Activated naive CD4-positive, alpha-beta T cell treated with anti-CD3 and anti-CD28 coated beads for 36 hours (primary cell): ENCODE measurements at regions of chr11 and their contacts with region 1.

Region 1: GRCh38 chr11:13183094-13183825 is 94.3 kb upstream of the BMAL1 start:
- DNase-seq: peak; percentile 13
- H3K4me3 Mint-ChIP-seq: no peak overlapping the region
- H3K27ac Mint-ChIP-seq: no peak overlapping the region
- H3K4me1 Mint-ChIP-seq: peaks cover 6% of the 10 kb centered on the region
- H3K27me3 Mint-ChIP-seq: peaks cover 9% of the 10 kb centered on the region

Region 2: GRCh38 chr11:11291041-11292015 is 1891.9 kb before region 1 on chr11:
- CTCF ChIA-PET with region 1: no interaction called
- intact Hi-C with region 1: no loop called
- DNase-seq: no peak
- H3K4me3 Mint-ChIP-seq: no peak overlapping the region
- H3K27ac Mint-ChIP-seq: no peak overlapping the region
- H3K4me1 Mint-ChIP-seq: no peaks in the 10 kb centered on the region
- H3K27me3 Mint-ChIP-seq: peaks cover 6% of the 10 kb centered on the region

Region 3: GRCh38 chr11:12331239-12331874 is 851.9 kb before region 1 on chr11:
- CTCF ChIA-PET with region 1: interaction called, 3 read pairs
- intact Hi-C with region 1: loop called (anchors 10 kb)
- DNase-seq: peak; percentile 89
- H3K4me3 Mint-ChIP-seq: no peak overlapping the region
- H3K27ac Mint-ChIP-seq: no peak overlapping the region
- H3K4me1 Mint-ChIP-seq: peaks cover 3% of the 10 kb centered on the region
- H3K27me3 Mint-ChIP-seq: no peaks in the 10 kb centered on the region

Region 4: DNA sequence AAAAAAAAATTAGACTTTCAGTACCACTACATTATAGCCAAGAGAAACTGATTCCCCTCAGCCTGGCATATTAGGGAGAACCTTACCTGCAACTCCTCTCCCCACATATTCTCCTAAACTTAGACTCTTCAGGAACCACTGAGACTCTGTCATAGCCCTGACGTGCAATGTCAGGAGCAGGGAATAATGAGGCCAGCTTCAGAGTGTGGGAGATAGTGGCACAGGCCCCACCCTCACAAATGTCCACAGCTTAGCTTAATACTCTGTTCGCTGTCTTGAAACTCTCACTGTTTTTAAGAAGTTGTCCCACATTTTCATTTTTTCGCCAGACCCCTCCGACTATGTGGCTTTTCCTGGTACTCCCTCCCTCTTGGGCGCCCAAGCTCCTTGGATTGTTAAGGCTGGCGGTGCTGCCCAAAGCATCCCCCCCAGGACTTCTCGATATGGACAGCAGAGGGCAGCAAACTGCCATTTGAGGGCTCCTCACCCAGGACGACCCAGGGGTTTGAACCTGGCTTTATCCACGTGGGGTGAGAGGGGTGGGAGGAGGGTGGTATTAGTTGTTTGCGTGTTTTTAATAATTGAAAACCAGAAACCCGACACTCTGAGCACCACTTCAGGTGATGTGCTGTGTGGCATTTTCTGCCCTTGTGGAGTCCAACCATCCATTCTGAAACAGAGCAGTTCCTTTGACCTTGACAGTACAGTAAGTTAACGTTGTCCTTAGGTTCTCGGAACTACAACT is 219.3 kb before region 1 on chr11:
- CTCF ChIA-PET with region 1: interaction called, 21 read pairs
- intact Hi-C with region 1: loop called (anchors 1 kb)
- DNase-seq: peak; percentile 75
- H3K4me3 Mint-ChIP-seq: no peak overlapping the region
- H3K27ac Mint-ChIP-seq: no peak overlapping the region
- H3K4me1 Mint-ChIP-seq: no peaks in the 10 kb centered on the region
- H3K27me3 Mint-ChIP-seq: peaks cover 13% of the 10 kb centered on the region

Region 5: GRCh38 chr11:12989428-12990161 is 193.7 kb before region 1 on chr11:
- CTCF ChIA-PET with region 1: no interaction called
- intact Hi-C with region 1: no loop called
- DNase-seq: no peak
- H3K4me3 Mint-ChIP-seq: no peak overlapping the region
- H3K27ac Mint-ChIP-seq: no peak overlapping the region
- H3K4me1 Mint-ChIP-seq: no peaks in the 10 kb centered on the region
- H3K27me3 Mint-ChIP-seq: peaks cover 9% of the 10 kb centered on the region

Region 6: DNA sequence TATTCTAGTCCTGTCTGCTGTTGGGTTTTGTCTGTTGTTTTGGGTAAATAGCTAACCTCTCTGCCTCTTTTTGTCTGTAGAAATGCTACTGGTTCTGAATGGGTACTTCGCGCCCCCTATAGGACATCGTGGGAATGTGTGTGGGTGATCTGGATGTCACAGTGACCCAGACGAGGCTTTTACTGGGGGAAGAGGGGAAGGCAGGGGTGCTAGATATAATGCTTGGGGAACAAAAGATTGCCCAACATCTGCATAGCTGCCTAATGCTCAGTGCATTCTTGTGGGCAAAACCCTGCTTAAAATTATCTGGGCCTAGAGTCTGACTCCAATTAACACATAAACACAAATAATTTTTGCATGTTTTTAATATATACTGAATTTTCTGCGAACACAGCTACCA is 152.1 kb after region 1 on chr11:
- CTCF ChIA-PET with region 1: interaction called, 8 read pairs
- intact Hi-C with region 1: loop called (anchors 2 kb)
- DNase-seq: peak; percentile 86
- H3K4me3 Mint-ChIP-seq: no peak overlapping the region
- H3K27ac Mint-ChIP-seq: no peak overlapping the region
- H3K4me1 Mint-ChIP-seq: peaks cover 76% of the 10 kb centered on the region
- H3K27me3 Mint-ChIP-seq: no peaks in the 10 kb centered on the region

Region 7: GRCh38 chr11:13358596-13359270 is 175.5 kb after region 1 on chr11:
- CTCF ChIA-PET with region 1: no interaction called
- intact Hi-C with region 1: no loop called
- DNase-seq: no peak
- H3K4me3 Mint-ChIP-seq: no peak overlapping the region
- H3K27ac Mint-ChIP-seq: no peak overlapping the region
- H3K4me1 Mint-ChIP-seq: no peaks in the 10 kb centered on the region
- H3K27me3 Mint-ChIP-seq: no peaks in the 10 kb centered on the region

Region 8: DNA sequence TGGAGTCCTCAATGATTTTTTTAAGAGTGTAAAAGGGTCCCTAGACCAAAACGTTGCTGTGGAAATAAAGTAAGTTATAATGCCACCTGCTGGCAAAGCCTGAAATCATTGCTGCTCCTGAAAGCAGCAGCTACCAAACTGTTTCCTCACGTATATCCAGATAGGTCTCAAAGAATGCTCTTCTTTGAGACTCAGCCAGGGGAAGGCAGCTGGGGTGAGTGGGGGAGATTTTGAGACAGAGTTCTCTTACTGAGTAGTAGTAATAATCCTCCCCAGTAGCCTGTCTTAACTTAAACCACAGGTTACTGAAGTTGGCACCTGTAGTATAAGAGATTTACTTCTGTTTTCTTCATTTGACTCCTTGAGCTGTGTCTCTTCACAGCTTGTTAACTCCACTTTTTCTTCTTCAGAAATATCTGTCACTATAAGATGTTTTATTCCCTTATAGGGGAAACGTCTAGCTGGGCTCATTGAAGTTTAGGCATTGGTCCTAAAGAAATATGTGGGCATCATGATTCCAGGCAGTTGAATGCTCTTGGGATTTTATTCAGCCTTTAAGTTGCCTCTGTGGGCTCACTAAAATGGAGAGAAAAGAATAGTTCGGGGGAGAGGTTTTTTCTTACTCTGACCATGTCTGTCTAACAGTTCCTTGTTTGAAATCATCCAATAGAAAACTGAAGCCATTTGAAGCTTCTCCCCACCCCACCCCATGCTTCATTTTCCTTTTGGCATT is 201.8 kb after region 1 on chr11:
- CTCF ChIA-PET with region 1: interaction called, 3 read pairs
- intact Hi-C with region 1: loop called (anchors 1 kb)
- DNase-seq: peak; percentile 46
- H3K4me3 Mint-ChIP-seq: no peak overlapping the region
- H3K27ac Mint-ChIP-seq: no peak overlapping the region
- H3K4me1 Mint-ChIP-seq: peaks cover 2% of the 10 kb centered on the region
- H3K27me3 Mint-ChIP-seq: no peaks in the 10 kb centered on the region

Region 9: GRCh38 chr11:14454861-14455632 is 1271.8 kb after region 1 on chr11:
- CTCF ChIA-PET with region 1: no interaction called
- intact Hi-C with region 1: no loop called
- DNase-seq: no peak
- H3K4me3 Mint-ChIP-seq: no peak overlapping the region
- H3K27ac Mint-ChIP-seq: no peak overlapping the region
- H3K4me1 Mint-ChIP-seq: no peaks in the 10 kb centered on the region
- H3K27me3 Mint-ChIP-seq: no peaks in the 10 kb centered on the region